HepG2 (cell line): ENCODE measurements at regions of chr20 and their contacts with region 1.

Region 1: DNA sequence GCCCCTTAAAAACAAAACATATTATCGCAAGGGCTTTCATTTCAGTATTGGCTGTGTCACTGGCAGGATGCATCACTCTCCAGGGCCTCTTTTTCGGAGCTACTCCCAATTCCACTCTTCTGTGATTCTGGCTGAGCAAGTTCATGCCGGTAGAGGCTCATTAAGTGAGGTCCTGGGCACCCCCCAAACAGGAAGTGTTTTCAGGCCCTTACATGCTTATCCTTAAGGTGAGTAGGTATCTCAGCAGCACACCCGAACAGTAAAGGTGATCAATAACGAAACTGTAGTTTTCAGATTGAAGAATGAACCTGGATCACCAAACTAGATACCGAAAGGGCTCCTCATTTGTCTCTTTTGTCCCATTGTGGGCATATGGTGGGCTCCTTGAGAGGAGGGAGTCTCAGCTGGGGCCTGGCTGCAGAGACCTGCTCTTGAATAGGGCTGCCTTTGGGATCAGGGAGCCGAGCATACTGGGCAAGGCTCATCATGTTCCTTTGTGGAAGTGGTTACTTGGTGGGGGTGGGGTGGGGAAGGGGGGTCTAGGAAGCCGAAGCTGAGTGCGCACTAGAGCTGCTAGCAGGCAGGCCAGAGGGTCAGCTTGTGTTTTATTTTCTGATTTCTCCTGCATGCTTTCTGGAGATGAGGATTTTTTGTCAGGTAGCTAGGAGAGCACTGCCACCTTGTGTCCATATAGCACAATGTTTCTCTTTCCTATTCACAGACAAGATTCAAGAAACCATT is 65.2 kb downstream of the CDS2 start:
- DNase-seq: peak; percentile 90
- ATAC-seq: peak; percentile 75
- H3K4me3 ChIP-seq: no peak overlapping the region
- H3K27ac ChIP-seq: no peak overlapping the region
- H3K4me1 ChIP-seq: peaks cover 11% of the 10 kb centered on the region; the same call in 1 of the 2 replicates
- H3K27me3 ChIP-seq: no peaks in the 10 kb centered on the region
- CTCF ChIP-seq: peak; percentile 95
- EP300 ChIP-seq: no peak
- POLR2A ChIP-seq: no peak
- RAD21 ChIP-seq: peak; percentile 98

Region 2: DNA sequence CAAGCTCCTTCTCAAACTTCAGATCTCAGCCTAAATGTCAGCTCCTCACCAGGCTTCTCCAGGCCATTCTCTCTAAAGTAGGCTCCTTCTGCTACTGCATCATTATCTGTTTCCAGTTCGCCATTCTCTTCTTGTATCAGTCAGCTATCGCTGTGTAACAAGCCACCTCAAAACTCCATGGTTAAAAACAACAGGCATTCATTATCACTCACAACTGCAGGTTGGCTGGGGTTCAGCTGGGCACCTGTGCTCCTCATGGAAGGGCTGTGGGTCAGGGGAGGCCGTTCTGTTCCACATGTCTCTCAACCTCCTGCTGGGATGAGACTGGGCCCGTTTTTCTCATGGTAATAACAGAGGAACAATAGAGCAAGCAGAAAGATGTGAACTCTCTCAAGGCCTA is 441.6 kb before region 1 on chr20:
- CTCF ChIA-PET with region 1: no interaction called
- POLR2A ChIA-PET with region 1: no interaction called
- in situ Hi-C with region 1: no loop called
- intact Hi-C with region 1: loop called (anchors 5 kb)
- DNase-seq: no peak
- ATAC-seq: no peak
- H3K4me3 ChIP-seq: no peak overlapping the region
- H3K27ac ChIP-seq: no peak overlapping the region
- H3K4me1 ChIP-seq: no peaks in the 10 kb centered on the region
- H3K27me3 ChIP-seq: peaks cover 3 to 29% of the 10 kb centered on the region in 2 experiments; a peak in 3 of 5 replicates
- CTCF ChIP-seq: no peak
- EP300 ChIP-seq: no peak
- POLR2A ChIP-seq: no peak
- RAD21 ChIP-seq: no peak

Region 3: GRCh38 chr20:5119435-5120188 is 72.4 kb before region 1 on chr20 and contains the start of gene PCNA:
- CTCF ChIA-PET with region 1: interaction called, 97 read pairs
- POLR2A ChIA-PET with region 1: interaction called, 73 read pairs
- in situ Hi-C with region 1: no loop called
- intact Hi-C with region 1: no loop called
- DNase-seq: peak; percentile 100
- ATAC-seq: peak; percentile 96
- H3K4me3 ChIP-seq: peak within 1 kb of the TSS; percentile 82 to 92 (median 83)
- H3K27ac ChIP-seq: peak within 1 kb of the TSS; percentile 86
- H3K4me1 ChIP-seq: peaks cover 50% of the 10 kb centered on the region
- H3K27me3 ChIP-seq: no peaks in the 10 kb centered on the region; a peak in 1 of 5 replicates
- CTCF ChIP-seq: peak; percentile 49
- EP300 ChIP-seq: peak; percentile 14 to 16; a peak in 2 of 4 replicates
- POLR2A ChIP-seq: peak; percentile 100
- RAD21 ChIP-seq: peak; percentile 52
- total RNA-seq, gene PCNA: 655 and 1,008 TPM in 2 replicates

Region 4: DNA sequence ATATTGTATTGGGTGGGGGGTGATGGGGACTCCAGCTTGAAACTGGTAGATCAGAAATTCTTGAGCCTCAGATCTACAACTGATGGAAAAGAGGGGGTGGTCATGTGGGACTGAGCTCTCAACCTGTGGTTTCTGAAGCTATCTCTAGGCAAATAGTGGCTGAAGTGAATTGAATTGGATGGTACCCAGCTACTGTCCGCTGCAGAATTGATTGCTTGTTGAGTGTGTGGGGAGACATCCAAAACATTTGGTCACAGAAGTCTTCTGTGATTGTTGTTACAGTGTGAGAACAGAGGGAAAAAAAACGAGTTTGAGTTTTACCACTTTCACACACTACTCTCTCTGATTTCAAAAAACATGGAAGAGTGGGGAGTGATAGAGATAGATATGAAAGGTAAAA is 50.4 kb before region 1 on chr20:
- CTCF ChIA-PET with region 1: no interaction called
- POLR2A ChIA-PET with region 1: interaction called, 3 read pairs
- in situ Hi-C with region 1: no loop called
- intact Hi-C with region 1: loop called (anchors 1 kb)
- DNase-seq: no peak
- ATAC-seq: no peak
- H3K4me3 ChIP-seq: no peak overlapping the region
- H3K27ac ChIP-seq: no peak overlapping the region
- H3K4me1 ChIP-seq: peaks cover 67% of the 10 kb centered on the region
- H3K27me3 ChIP-seq: no peaks in the 10 kb centered on the region
- CTCF ChIP-seq: no peak
- EP300 ChIP-seq: no peak
- POLR2A ChIP-seq: no peak
- RAD21 ChIP-seq: no peak

Region 5: GRCh38 chr20:5156675-5157448 is 35.1 kb before region 1 on chr20:
- CTCF ChIA-PET with region 1: no interaction called
- POLR2A ChIA-PET with region 1: interaction called, 7 read pairs
- in situ Hi-C with region 1: no loop called
- intact Hi-C with region 1: loop called (anchors 2 kb)
- DNase-seq: peak; percentile 70
- ATAC-seq: peak; percentile 33; the same call in 2 of the 3 replicates
- H3K4me3 ChIP-seq: no peak overlapping the region
- H3K27ac ChIP-seq: peak overlapping the region; percentile 19
- H3K4me1 ChIP-seq: peaks cover 84% of the 10 kb centered on the region
- H3K27me3 ChIP-seq: no peaks in the 10 kb centered on the region
- CTCF ChIP-seq: peak; percentile 46
- EP300 ChIP-seq: peak in 1 of 2 experiments; percentile 72; a peak in 2 of 4 replicates
- POLR2A ChIP-seq: no peak
- RAD21 ChIP-seq: no peak

Region 6: GRCh38 chr20:5268449-5268848 is 76.5 kb after region 1 on chr20:
- CTCF ChIA-PET with region 1: no interaction called
- POLR2A ChIA-PET with region 1: no interaction called
- in situ Hi-C with region 1: no loop called
- intact Hi-C with region 1: no loop called
- DNase-seq: no peak
- ATAC-seq: no peak
- H3K4me3 ChIP-seq: no peak overlapping the region
- H3K27ac ChIP-seq: no peak overlapping the region
- H3K4me1 ChIP-seq: no peaks in the 10 kb centered on the region
- H3K27me3 ChIP-seq: peaks cover 8 to 66% of the 10 kb centered on the region in 2 experiments; a peak in 4 of 5 replicates
- CTCF ChIP-seq: no peak
- EP300 ChIP-seq: no peak
- POLR2A ChIP-seq: no peak
- RAD21 ChIP-seq: no peak